ENCODE measurements at regions of chr1 and their contacts with region 1.

Region 1: GRCh38 chr1:25037174-25038074 is 107.3 kb upstream of the RUNX3 start:
- DNase-seq: no peak
- ATAC-seq: peak; percentile 59 to 74 (median 68)
- H3K4me3 ChIP-seq: no peak overlapping the region
- H3K27ac ChIP-seq: no peak overlapping the region
- H3K4me1 ChIP-seq: no peaks in the 10 kb centered on the region
- H3K27me3 ChIP-seq: no peaks in the 10 kb centered on the region
- CTCF ChIP-seq: peak; percentile 52 to 64 (median 55)
- POLR2A ChIP-seq: no peak

Region 2: GRCh38 chr1:24847995-24848881 is 189.2 kb before region 1 on chr1:
- intact Hi-C with region 1: loop called in 1 of 2 experiments (anchors 10 kb)
- DNase-seq: peak; percentile 93 to 95 (median 95)
- ATAC-seq: peak; percentile 92 to 96 (median 94)
- H3K4me3 ChIP-seq: peak overlapping the region; percentile 40 to 50 (median 49)
- H3K27ac ChIP-seq: peak overlapping the region; percentile 27 to 62 (median 44)
- H3K4me1 ChIP-seq: peaks cover 0 to 17% (median 4%) of the 10 kb centered on the region in 4 donors
- H3K27me3 ChIP-seq: no peaks in the 10 kb centered on the region
- CTCF ChIP-seq: peak; percentile 93 to 97 (median 94)
- POLR2A ChIP-seq: peak; percentile 23

Region 3: DNA sequence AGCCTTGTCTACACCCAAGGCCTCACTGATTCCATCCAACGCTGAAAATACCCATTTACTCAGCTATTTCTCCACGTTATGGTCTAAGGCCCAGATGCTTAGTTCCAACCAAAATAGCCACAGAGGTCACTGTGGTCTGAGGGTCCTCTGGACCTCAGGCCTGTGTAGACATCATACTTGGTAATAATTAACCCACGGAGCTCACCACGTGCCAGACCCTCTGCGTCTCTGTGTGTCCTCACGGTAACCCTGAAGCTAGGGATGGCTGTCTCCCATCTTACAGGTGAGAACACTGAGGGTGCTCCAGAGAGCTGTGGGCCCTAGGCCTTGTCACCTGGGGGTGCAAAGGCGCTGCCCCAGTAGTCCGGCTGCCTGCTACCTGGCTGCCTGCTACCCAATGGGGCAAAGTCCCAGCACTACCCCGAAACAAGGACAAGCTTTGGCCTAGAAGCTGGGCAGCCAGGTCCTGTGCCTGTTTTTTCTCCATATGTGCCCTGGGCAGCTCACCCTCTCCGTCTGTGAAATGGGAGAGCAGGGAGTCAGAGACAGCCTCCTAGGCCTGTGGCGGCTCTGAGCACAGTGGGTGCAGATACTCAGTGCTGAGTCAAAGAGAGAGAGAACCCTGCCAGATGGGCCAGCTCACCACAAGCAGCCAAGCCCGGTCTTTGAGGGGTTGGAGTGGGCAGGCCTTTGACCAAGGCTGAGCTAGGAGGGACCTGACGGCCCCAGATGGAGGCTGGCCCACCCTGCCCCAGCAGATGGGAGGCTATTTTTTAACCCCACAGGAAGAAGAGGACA is 90.4 kb before region 1 on chr1:
- intact Hi-C with region 1: loop called in 1 of 2 experiments (anchors 10 kb)
- DNase-seq: no peak
- ATAC-seq: peak in 1 of 4 donors; percentile 47
- H3K4me3 ChIP-seq: no peak overlapping the region
- H3K27ac ChIP-seq: no peak overlapping the region
- H3K4me1 ChIP-seq: no peaks in the 10 kb centered on the region
- H3K27me3 ChIP-seq: no peaks in the 10 kb centered on the region
- CTCF ChIP-seq: no peak
- POLR2A ChIP-seq: no peak

Measured in right lobe of liver (tissue), 6 donors.